A549 (cell line): ENCODE measurements at regions of chr19 and their contacts with region 1.

Region 1: GRCh38 chr19:2475702-2476450 is at the start of gene GADD45B:
- DNase-seq: peak; percentile 94 to 96
- ATAC-seq: peak; percentile 41 to 65
- H3K4me3 ChIP-seq: peak within 1 kb of the TSS; percentile 95
- H3K27ac ChIP-seq: peak within 1 kb of the TSS; percentile 93 to 99
- H3K4me1 ChIP-seq: peaks cover 9% of the 10 kb centered on the region
- CTCF ChIP-seq: no peak
- EP300 ChIP-seq: no peak
- POLR2A ChIP-seq: peak; percentile 100
- RAD21 ChIP-seq: peak in 1 of 2 experiments; percentile 24; a peak in 2 of 5 replicates
- polyA plus RNA-seq, gene GADD45B: 65.3 and 72.5 TPM in 2 replicates

Region 2: DNA sequence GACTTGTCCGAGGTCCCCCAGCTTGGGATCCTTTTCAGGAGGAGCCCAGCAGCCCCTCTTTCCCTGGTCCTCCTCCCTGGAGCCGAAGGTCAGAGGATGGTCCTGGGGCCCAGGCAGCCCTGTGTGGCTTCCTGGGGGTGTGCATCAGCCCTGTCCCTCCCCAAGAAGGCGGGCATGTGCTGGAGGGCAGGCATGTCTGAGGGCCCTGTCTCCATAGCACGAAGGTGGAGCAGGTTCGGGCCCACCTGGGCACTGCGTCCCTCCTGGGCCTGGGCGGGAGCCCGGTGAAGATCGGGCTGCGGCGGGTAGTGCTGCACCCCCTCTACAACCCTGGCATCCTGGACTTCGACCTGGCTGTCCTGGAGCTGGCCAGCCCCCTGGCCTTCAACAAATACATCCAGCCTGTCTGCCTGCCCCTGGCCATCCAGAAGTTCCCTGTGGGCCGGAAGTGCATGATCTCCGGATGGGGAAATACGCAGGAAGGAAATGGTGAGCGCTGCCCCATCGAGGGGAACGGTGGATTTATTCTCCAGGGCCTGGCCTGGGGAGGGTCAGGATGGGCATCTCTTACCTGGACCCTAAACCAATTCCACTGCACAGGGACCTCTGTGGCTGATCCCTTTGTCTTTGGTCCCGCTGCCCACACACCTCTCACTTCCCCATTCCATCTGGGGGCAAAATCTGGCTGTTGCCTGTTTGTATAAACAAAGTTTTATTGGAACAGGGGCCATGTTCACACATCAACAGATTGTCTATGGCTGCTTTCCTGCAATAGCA is 59.4 kb before region 1 on chr19:
- CTCF ChIA-PET with region 1: no interaction called
- POLR2A ChIA-PET with region 1: no interaction called
- DNase-seq: no peak
- ATAC-seq: peak; percentile 32 to 36; a peak in 5 of 6 replicates
- H3K4me3 ChIP-seq: no peak overlapping the region
- H3K27ac ChIP-seq: no peak overlapping the region
- H3K4me1 ChIP-seq: no peaks in the 10 kb centered on the region
- CTCF ChIP-seq: no peak
- EP300 ChIP-seq: no peak
- POLR2A ChIP-seq: no peak
- RAD21 ChIP-seq: no peak

Region 3: GRCh38 chr19:2427429-2428320 is 48.2 kb before region 1 on chr19 and contains the start of gene TIMM13:
- CTCF ChIA-PET with region 1: interaction called, 3 read pairs
- POLR2A ChIA-PET with region 1: interaction called, 16 read pairs
- DNase-seq: peak; percentile 78 to 94
- ATAC-seq: peak; percentile 87 to 90
- H3K4me3 ChIP-seq: peak within 1 kb of the TSS; percentile 95
- H3K27ac ChIP-seq: peak within 1 kb of the TSS; percentile 97 to 99
- H3K4me1 ChIP-seq: peaks cover 17% of the 10 kb centered on the region; the same call in 2 of the 3 replicates
- CTCF ChIP-seq: no peak
- EP300 ChIP-seq: no peak
- POLR2A ChIP-seq: peak; percentile 4; the same call in 1 of the 2 replicates
- RAD21 ChIP-seq: no peak
- polyA plus RNA-seq, gene TIMM13: 23.9 and 24.7 TPM in 2 replicates

Region 4: DNA sequence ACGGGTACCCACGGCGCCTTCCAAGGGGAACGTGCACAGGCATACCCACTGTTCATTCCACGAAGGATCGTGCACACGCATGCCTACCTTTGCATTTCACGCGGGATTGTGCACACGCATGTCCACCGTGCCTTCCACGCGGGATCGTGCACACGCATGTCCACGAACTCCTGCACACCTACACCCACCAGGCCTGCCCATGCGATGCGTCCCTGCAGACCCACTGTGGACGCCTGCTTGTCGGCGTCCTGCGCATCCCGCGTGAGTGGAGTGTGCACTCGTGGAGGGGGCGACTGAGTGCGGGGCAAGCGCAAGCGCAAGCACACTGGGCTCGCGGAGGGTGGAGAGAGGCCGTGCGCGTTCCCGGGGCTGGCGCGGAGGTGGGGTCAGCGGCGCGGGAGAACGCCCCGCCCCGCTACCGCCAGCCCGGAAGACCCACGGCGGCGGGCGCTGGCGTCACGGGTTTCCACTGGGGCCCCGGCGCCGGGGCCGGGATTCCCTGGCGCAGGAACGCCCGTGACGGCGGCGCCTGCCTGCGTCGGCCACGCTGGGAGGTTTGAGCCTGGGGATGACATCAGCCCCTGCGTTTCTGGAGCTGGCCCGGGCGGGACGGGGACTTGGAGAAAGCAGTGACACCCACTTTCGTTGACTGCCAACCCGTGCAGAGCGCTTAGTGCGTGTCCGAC is 18.7 kb after region 1 on chr19:
- CTCF ChIA-PET with region 1: interaction called, 5 read pairs
- POLR2A ChIA-PET with region 1: interaction called, 64 read pairs
- DNase-seq: peak in 1 of 2 experiments; percentile 62
- ATAC-seq: peak; percentile 72 to 76
- H3K4me3 ChIP-seq: peak overlapping the region; percentile 63
- H3K27ac ChIP-seq: peak overlapping the region; percentile 83 to 95
- H3K4me1 ChIP-seq: peaks cover 54% of the 10 kb centered on the region
- CTCF ChIP-seq: no peak
- EP300 ChIP-seq: no peak
- POLR2A ChIP-seq: peak; percentile 14; the same call in 1 of the 2 replicates
- RAD21 ChIP-seq: no peak; a peak in 1 of 5 replicates

Region 5: GRCh38 chr19:2532252-2533071 is 56.6 kb after region 1 on chr19:
- CTCF ChIA-PET with region 1: interaction called, 4 read pairs
- POLR2A ChIA-PET with region 1: interaction called, 53 read pairs
- DNase-seq: peak in 1 of 2 experiments; percentile 91
- ATAC-seq: peak; percentile 68 to 69
- H3K4me3 ChIP-seq: no peak overlapping the region
- H3K27ac ChIP-seq: peak overlapping the region; percentile 89 to 94
- H3K4me1 ChIP-seq: peaks cover 65% of the 10 kb centered on the region
- CTCF ChIP-seq: no peak
- EP300 ChIP-seq: no peak; a peak in 1 of 5 replicates
- POLR2A ChIP-seq: no peak
- RAD21 ChIP-seq: no peak

Region 6: DNA sequence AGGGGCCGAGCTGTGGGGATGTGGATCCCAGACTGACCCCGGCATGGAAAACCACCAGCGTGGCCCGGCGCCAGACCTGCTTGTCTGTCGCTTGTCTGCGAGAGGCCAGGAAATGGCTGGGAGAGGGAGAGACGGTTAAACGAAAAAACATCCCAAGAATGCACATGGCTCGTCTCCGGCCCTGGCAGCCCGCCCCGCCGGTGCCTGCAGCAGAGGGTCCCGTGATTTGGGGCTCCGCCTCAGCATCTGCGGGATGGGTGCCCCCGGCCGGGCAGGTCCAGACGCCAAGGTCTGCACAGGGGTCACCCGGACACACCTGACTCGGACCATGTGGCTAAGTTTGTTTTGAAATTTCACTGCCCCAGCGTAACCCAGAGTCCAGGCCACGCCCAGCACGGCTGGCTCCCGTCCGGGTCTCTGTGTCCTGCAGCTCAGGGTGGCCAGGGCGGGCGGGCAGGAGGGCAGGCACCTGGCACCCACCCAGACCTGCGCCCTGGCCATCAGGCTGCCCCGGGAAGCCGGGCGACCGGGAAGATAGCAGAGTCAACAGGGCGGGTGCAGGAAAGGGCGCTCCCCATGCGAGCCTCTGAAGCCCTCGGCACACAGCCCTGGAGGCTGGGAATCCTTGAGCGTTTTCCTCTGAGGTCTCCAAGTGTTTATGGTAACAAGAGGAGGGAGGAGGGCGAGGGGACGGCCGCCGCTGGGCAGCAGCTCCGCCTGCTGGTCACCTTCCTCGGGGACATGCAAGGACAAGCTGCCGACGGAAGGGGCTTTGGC is 103.2 kb after region 1 on chr19:
- CTCF ChIA-PET with region 1: interaction called, 50 read pairs
- POLR2A ChIA-PET with region 1: interaction called, 211 read pairs
- DNase-seq: peak; percentile 74 to 94
- ATAC-seq: peak; percentile 88 to 92
- H3K4me3 ChIP-seq: peak overlapping the region; percentile 35
- H3K27ac ChIP-seq: peak overlapping the region; percentile 96
- H3K4me1 ChIP-seq: peaks cover 35% of the 10 kb centered on the region
- CTCF ChIP-seq: peak; percentile 82
- EP300 ChIP-seq: peak; percentile 27 to 69; a peak in 3 of 5 replicates
- POLR2A ChIP-seq: no peak
- RAD21 ChIP-seq: peak; percentile 91 to 93

Region 7: DNA sequence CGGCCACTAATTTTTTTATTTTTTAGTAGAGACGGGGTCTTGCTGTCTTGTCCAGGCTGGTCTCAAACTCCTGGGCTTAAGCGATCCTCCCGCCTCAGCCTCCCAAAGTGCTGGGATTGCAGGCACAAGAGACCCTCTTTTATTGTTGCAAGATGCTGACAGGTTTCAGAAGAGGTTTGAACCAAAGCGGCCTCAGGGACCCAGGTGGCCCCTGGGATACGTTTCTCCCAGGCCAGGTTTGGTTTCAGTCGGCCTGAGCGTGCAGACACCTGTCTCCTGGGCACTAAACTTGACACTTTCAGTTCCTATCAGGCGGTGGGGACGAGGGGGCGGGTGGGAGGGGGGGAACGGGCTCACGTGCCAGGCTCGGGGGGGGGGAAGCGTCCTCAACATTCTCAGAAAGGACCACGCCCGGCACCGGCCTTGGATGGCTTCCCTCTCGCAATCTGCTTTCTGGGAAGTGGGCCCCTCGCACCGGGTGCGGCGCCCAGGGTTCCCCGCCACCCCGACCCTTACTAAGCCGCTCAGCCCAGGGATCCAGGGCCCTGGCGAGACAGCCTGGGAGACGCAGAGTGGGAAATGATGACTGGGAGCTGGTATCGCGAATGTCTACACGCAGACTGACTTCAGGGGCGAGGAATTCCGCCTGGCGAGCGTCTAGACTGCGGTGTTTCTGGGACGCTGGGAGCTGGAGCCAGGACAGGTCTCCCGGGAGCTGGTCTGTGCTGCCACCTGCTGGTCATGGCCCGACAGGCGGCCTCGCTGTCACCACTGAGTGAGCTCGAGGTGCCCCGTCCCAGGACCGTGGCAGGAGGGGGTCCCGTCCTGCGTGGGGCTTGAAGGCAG is 135.0 kb after region 1 on chr19:
- CTCF ChIA-PET with region 1: interaction called, 156 read pairs
- POLR2A ChIA-PET with region 1: interaction called, 102 read pairs
- DNase-seq: peak; percentile 56 to 85
- ATAC-seq: peak; percentile 93 to 95
- H3K4me3 ChIP-seq: peak overlapping the region; percentile 37
- H3K27ac ChIP-seq: peak overlapping the region; percentile 94 to 98
- H3K4me1 ChIP-seq: peaks cover 15% of the 10 kb centered on the region; the same call in 2 of the 3 replicates
- CTCF ChIP-seq: peak; percentile 82
- EP300 ChIP-seq: no peak
- POLR2A ChIP-seq: no peak
- RAD21 ChIP-seq: peak; percentile 94 to 98

Region 8: GRCh38 chr19:2636897-2637683 is 161.2 kb after region 1 on chr19:
- CTCF ChIA-PET with region 1: interaction called, 8 read pairs
- POLR2A ChIA-PET with region 1: interaction called, 16 read pairs
- DNase-seq: peak; percentile 52 to 67
- ATAC-seq: peak; percentile 56 to 82
- H3K4me3 ChIP-seq: no peak overlapping the region
- H3K27ac ChIP-seq: peak overlapping the region in 1 of 2 experiments; percentile 52; a peak in 1 of 6 replicates
- H3K4me1 ChIP-seq: peaks cover 10% of the 10 kb centered on the region; the same call in 1 of the 3 replicates
- CTCF ChIP-seq: peak; percentile 62
- EP300 ChIP-seq: no peak
- POLR2A ChIP-seq: no peak
- RAD21 ChIP-seq: peak; percentile 73 to 81